ENCODE measurements at regions of chr15 and their contacts with region 1.

Region 1: GRCh38 chr15:62150445-62150844 is 14.6 kb downstream of the C2CD4B start:
- DNase-seq: no peak

Region 2: GRCh38 chr15:61169904-61170695 is 980.3 kb before region 1 on chr15:
- intact Hi-C with region 1: loop called in 1 of 2 experiments (anchors 10 kb)
- DNase-seq: no peak

Region 3: GRCh38 chr15:62209322-62209721 is 58.9 kb after region 1 on chr15:
- intact Hi-C with region 1: no loop called
- DNase-seq: no peak